ENCODE measurements at regions of chr2 and their contacts with region 1.

Region 1: GRCh38 chr2:108637304-108637669 is 82.0 kb upstream of the RANBP2 start:
- DNase-seq: no peak
- H3K4me3 Mint-ChIP-seq: no peak overlapping the region
- H3K27ac Mint-ChIP-seq: no peak overlapping the region
- H3K4me1 Mint-ChIP-seq: peaks cover 54% of the 10 kb centered on the region
- H3K27me3 Mint-ChIP-seq: no peaks in the 10 kb centered on the region

Region 2: DNA sequence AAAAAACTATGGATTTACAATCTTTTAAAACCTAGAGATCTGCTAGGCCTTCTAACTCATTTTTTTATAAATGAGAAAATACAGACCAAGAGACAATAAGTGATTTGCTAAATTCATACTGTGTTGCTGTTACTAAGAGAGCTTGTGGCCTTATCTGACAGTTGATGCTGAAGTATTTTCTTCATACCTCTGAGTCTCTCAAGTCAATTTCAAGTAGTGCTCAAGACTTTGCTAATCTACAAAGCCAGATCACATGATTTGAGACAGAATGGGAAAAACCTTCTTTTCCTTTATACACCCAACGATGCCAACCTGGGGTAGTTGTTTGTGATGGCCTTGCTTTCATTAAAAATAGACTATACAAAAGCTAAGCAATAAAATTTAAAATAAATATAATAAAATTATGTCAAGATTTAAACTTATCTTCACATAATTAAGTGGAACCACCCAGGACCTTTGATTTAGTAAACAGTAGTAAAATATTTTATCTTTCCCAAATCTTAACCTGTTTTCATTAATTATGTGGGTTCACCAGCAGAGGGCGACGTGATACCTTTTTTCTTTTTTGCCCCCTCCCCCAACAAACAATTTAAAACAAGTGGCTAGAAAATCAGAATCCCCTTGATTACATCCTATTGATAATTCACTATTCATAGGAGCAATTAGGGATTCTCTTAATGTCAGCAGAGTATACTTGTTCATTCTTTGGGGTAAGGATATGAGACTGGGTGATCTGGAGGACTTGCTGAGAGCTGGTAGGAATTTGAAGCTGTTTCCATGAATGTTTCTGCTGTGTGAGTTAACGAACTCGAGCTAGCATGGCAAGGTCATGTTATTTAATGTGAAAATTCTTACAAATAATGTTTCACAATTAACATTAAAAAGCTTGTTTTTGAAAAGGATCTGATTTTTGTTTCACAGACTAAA is 700.6 kb before region 1 on chr2:
- CTCF ChIA-PET with region 1: no interaction called
- intact Hi-C with region 1: loop called (anchors 5 kb)
- DNase-seq: peak; percentile 12
- H3K4me3 Mint-ChIP-seq: no peak overlapping the region
- H3K27ac Mint-ChIP-seq: no peak overlapping the region
- H3K4me1 Mint-ChIP-seq: no peaks in the 10 kb centered on the region
- H3K27me3 Mint-ChIP-seq: peaks cover 14% of the 10 kb centered on the region

Region 3: DNA sequence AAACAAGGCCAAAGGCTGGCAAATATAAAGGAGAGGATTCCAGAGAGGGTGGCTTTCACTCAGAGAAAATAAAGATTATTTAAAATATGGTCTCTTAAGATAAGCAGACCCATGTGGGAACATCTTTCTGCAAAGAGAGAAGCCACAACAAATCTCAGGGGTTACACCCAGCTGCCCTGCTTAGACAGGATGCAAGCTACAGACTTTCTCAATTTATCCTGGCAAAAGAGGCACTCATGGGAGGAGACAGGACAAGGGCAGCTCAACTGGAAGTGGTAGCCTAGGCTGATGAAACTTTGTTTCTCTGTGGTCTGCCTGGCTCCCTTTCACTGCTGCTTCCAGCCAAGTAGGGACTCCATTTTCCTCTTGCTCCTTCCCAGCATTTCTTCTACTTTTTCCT is 285.4 kb before region 1 on chr2:
- CTCF ChIA-PET with region 1: interaction called, 3 read pairs
- intact Hi-C with region 1: loop called (anchors 1 kb)
- DNase-seq: no peak
- H3K4me3 Mint-ChIP-seq: no peak overlapping the region
- H3K27ac Mint-ChIP-seq: no peak overlapping the region
- H3K4me1 Mint-ChIP-seq: no peaks in the 10 kb centered on the region
- H3K27me3 Mint-ChIP-seq: peaks cover 5% of the 10 kb centered on the region

Region 4: GRCh38 chr2:108448678-108449493 is 188.4 kb before region 1 on chr2 and contains the start of gene GCC2:
- CTCF ChIA-PET with region 1: interaction called, 3 read pairs
- intact Hi-C with region 1: loop called (anchors 5 kb)
- DNase-seq: peak; percentile 97
- H3K4me3 Mint-ChIP-seq: peak within 1 kb of the TSS; percentile 87
- H3K27ac Mint-ChIP-seq: peak within 1 kb of the TSS; percentile 91
- H3K4me1 Mint-ChIP-seq: peaks cover 27% of the 10 kb centered on the region
- H3K27me3 Mint-ChIP-seq: no peaks in the 10 kb centered on the region
- total RNA-seq, gene GCC2: 33.5 to 39.4 TPM

Region 5: GRCh38 chr2:108594132-108594981 is 42.9 kb before region 1 on chr2:
- CTCF ChIA-PET with region 1: interaction called, 57 read pairs
- intact Hi-C with region 1: loop called (anchors 1 kb)
- DNase-seq: peak; percentile 30
- H3K4me3 Mint-ChIP-seq: peak overlapping the region; percentile 17
- H3K27ac Mint-ChIP-seq: no peak overlapping the region
- H3K4me1 Mint-ChIP-seq: peaks cover 49% of the 10 kb centered on the region
- H3K27me3 Mint-ChIP-seq: no peaks in the 10 kb centered on the region

Region 6: DNA sequence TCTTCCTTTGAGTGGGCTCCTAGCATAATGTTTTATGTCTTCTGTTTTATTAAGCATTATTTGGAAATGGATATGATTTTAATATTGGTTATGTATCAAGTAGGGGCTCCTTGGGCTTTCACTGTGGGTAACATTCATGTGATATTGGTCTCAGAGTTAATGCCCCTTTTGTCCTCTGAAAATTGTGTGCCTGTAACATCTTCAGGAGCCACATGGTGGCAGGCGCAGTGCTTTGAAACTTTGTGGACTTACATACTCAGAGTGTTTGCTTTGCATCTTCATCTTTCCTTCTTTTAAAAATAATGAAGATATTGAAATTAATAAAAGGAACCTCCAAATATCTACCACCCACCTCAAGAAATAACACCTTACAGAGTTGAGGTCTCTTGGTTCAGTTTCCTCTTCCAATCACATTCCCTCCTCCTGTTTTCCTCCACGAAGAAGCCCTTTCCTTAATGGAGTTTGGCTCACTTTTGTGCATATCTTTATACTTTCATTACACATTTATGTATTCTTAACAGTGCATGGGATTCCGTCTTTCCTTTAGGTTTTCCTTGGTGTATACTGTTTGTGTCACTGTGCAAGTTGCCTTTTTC is 29.5 kb before region 1 on chr2:
- CTCF ChIA-PET with region 1: interaction called, 147 read pairs
- intact Hi-C with region 1: loop called (anchors 1 kb)
- DNase-seq: peak; percentile 68
- H3K4me3 Mint-ChIP-seq: no peak overlapping the region
- H3K27ac Mint-ChIP-seq: no peak overlapping the region
- H3K4me1 Mint-ChIP-seq: peaks cover 31% of the 10 kb centered on the region
- H3K27me3 Mint-ChIP-seq: no peaks in the 10 kb centered on the region